ENCODE measurements at regions of chr10 and their contacts with region 1.

Region 1: GRCh38 chr10:62826273-62826672 is 10.1 kb upstream of the EGR2 start:
- DNase-seq: no peak
- H3K4me3 ChIP-seq: no peak overlapping the region
- H3K27ac ChIP-seq: no peak overlapping the region
- H3K4me1 ChIP-seq: no peaks in the 10 kb centered on the region
- H3K27me3 ChIP-seq: no peaks in the 10 kb centered on the region
- CTCF ChIP-seq: no peak

Region 2: GRCh38 chr10:62573929-62574328 is 252.3 kb before region 1 on chr10:
- intact Hi-C with region 1: no loop called
- DNase-seq: no peak
- H3K4me3 ChIP-seq: no peak overlapping the region
- H3K27ac ChIP-seq: no peak overlapping the region
- H3K4me1 ChIP-seq: no peaks in the 10 kb centered on the region
- H3K27me3 ChIP-seq: no peaks in the 10 kb centered on the region
- CTCF ChIP-seq: no peak

Region 3: GRCh38 chr10:62610649-62611229 is 215.5 kb before region 1 on chr10:
- intact Hi-C with region 1: loop called (anchors 10 kb)
- DNase-seq: peak; percentile 69 to 84 (median 78)
- H3K4me3 ChIP-seq: no peak overlapping the region
- H3K27ac ChIP-seq: no peak overlapping the region
- H3K4me1 ChIP-seq: no peaks in the 10 kb centered on the region
- H3K27me3 ChIP-seq: no peaks in the 10 kb centered on the region
- CTCF ChIP-seq: peak; percentile 48

Region 4: DNA sequence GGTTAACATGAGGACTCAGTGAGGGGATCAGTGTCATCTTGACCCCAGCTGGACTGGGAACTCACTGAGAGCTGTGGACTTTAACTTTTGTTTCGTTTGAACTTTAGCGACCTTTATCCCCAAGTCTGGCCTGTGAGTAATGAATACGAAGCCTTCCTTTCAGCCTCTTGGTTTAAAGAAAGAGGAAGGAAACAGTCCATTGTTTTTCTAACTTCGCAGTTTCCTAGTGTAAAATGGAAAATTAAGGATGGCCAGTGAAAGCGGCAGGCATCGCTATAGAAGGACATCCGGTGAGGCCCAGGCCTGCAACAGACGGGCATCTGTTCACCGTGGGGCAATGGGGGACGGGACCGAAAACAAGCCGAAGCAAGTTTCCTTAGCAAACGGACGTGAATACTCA is 65.9 kb before region 1 on chr10:
- intact Hi-C with region 1: no loop called
- DNase-seq: peak in 1 of 5 donors; percentile 31
- H3K4me3 ChIP-seq: no peak overlapping the region
- H3K27ac ChIP-seq: peak overlapping the region in 1 of 2 donors; percentile 51
- H3K4me1 ChIP-seq: no peaks in the 10 kb centered on the region
- H3K27me3 ChIP-seq: no peaks in the 10 kb centered on the region
- CTCF ChIP-seq: no peak

Measured in kidney (tissue), 22 donors.